ENCODE measurements at regions of chr11 and their contacts with region 1.

Region 1: GRCh38 chr11:59753650-59754493 is 1.3 kb upstream of the STX3 start:
- DNase-seq: peak; percentile 72 to 82 (median 79)
- H3K4me3 ChIP-seq: peak overlapping the region; percentile 62 to 79
- H3K4me3 Mint-ChIP-seq: peak overlapping the region; percentile 87 to 99 (median 96)
- H3K27ac ChIP-seq: peak overlapping the region; percentile 44
- H3K27ac Mint-ChIP-seq: peak overlapping the region; percentile 59 to 94 (median 84)
- H3K4me1 ChIP-seq: peaks cover 9% of the 10 kb centered on the region
- H3K4me1 Mint-ChIP-seq: peaks cover 16 to 42% (median 23%) of the 10 kb centered on the region in 4 donors
- H3K27me3 ChIP-seq: no peaks in the 10 kb centered on the region
- H3K27me3 Mint-ChIP-seq: peaks cover 8 to 10% of the 10 kb centered on the region in 2 donors

Region 2: GRCh38 chr11:58900479-58901420 is 853.1 kb before region 1 on chr11:
- CTCF ChIA-PET with region 1: no interaction called
- POLR2A ChIA-PET with region 1: no interaction called
- intact Hi-C with region 1: no loop called
- DNase-seq: no peak
- H3K4me3 ChIP-seq: no peak overlapping the region
- H3K4me3 Mint-ChIP-seq: no peak overlapping the region
- H3K27ac ChIP-seq: no peak overlapping the region
- H3K27ac Mint-ChIP-seq: no peak overlapping the region
- H3K4me1 ChIP-seq: no peaks in the 10 kb centered on the region
- H3K4me1 Mint-ChIP-seq: no peaks in the 10 kb centered on the region
- H3K27me3 ChIP-seq: no peaks in the 10 kb centered on the region
- H3K27me3 Mint-ChIP-seq: peaks cover 40 to 47% of the 10 kb centered on the region in 2 donors

Region 3: GRCh38 chr11:59542142-59542810 is 211.6 kb before region 1 on chr11:
- CTCF ChIA-PET with region 1: interaction called, 4 read pairs
- POLR2A ChIA-PET with region 1: no interaction called
- intact Hi-C with region 1: loop called (anchors 2 kb)
- DNase-seq: no peak
- H3K4me3 ChIP-seq: no peak overlapping the region
- H3K4me3 Mint-ChIP-seq: no peak overlapping the region
- H3K27ac ChIP-seq: no peak overlapping the region
- H3K27ac Mint-ChIP-seq: no peak overlapping the region
- H3K4me1 ChIP-seq: peaks cover 4% of the 10 kb centered on the region
- H3K4me1 Mint-ChIP-seq: peaks cover 4 to 9% (median 5%) of the 10 kb centered on the region in 4 donors
- H3K27me3 ChIP-seq: no peaks in the 10 kb centered on the region
- H3K27me3 Mint-ChIP-seq: no peaks in the 10 kb centered on the region

Region 4: DNA sequence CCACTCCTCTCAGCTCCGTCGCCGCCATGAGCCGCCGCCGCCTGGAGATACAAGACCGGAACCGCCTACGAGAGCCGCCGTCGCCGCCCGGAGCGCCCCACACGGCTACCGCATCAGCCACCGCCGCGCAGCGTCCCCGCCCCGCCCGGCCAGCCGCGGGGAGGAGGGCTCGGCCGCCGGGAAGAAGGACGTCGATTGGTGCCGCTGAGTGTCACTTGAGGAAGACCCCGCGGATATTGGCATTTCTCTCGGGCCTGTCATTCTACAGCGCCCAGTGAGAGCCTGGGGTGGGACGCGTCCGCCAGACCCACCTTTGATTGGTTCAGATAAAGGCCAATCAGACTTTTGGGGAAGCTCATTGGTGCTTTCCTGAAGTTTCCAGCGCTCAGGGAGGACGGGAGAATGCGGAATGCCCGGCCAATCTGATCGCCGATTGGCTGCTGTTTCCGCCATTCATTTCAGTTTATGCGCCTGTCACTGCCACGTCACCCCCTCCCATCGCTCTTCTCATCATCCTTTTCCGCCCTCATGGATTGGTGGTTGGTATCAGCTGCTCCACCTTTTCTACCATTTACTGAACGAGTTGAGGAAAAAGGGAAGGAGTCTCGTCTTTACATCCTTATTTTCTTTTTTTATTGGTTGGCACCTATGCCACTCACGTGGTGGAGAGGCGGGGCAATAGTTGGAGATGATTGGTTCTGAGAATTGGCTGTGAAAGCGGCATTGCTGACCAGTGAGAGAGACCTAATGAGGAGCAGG is 138.1 kb before region 1 on chr11 and contains the start of gene OSBP:
- CTCF ChIA-PET with region 1: no interaction called
- POLR2A ChIA-PET with region 1: interaction called, 12 read pairs
- intact Hi-C with region 1: loop called (anchors 2 kb)
- DNase-seq: peak; percentile 98 to 100 (median 100)
- H3K4me3 ChIP-seq: peak within 1 kb of the TSS; percentile 84 to 86
- H3K4me3 Mint-ChIP-seq: peak within 1 kb of the TSS; percentile 93 to 99 (median 96)
- H3K27ac ChIP-seq: peak within 1 kb of the TSS; percentile 95
- H3K27ac Mint-ChIP-seq: peak within 1 kb of the TSS; percentile 83 to 99 (median 98)
- H3K4me1 ChIP-seq: peaks cover 48% of the 10 kb centered on the region
- H3K4me1 Mint-ChIP-seq: peaks cover 29 to 53% (median 42%) of the 10 kb centered on the region in 4 donors
- H3K27me3 ChIP-seq: no peaks in the 10 kb centered on the region
- H3K27me3 Mint-ChIP-seq: no peaks in the 10 kb centered on the region
- total RNA-seq, gene OSBP: 55.3 to 55.6 TPM

Region 5: GRCh38 chr11:59728913-59729312 is 25.0 kb before region 1 on chr11:
- CTCF ChIA-PET with region 1: no interaction called
- POLR2A ChIA-PET with region 1: no interaction called
- intact Hi-C with region 1: no loop called
- DNase-seq: peak in 1 of 5 donors; percentile 31
- H3K4me3 ChIP-seq: no peak overlapping the region
- H3K4me3 Mint-ChIP-seq: no peak overlapping the region
- H3K27ac ChIP-seq: no peak overlapping the region
- H3K27ac Mint-ChIP-seq: peak overlapping the region in 1 of 7 donors; percentile 5
- H3K4me1 ChIP-seq: no peaks in the 10 kb centered on the region
- H3K4me1 Mint-ChIP-seq: peaks cover 0 to 7% (median 2%) of the 10 kb centered on the region in 4 donors
- H3K27me3 ChIP-seq: no peaks in the 10 kb centered on the region
- H3K27me3 Mint-ChIP-seq: peaks cover 2 to 6% of the 10 kb centered on the region in 2 donors

Region 6: DNA sequence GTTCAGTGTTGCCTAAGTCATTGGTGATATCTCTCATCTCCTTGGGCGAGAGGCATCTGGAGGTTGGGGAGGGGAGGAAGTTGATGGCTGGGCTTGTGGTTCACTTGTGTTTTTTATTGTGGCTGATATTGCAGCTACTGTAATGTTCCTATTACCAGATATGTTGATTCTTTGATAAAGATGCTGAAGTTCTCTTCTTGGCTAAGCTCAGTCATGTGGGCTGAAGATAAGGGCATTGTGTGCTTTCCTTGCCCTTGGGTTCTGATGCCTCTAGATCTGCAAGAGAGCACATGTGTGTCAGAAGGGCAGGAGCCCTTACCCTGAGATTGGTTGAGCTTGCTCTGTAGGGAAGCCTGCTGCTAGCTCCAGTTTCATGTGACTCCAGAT is 13.3 kb after region 1 on chr11:
- CTCF ChIA-PET with region 1: interaction called, 53 read pairs
- POLR2A ChIA-PET with region 1: interaction called, 26 read pairs
- intact Hi-C with region 1: loop called (anchors 1 kb)
- DNase-seq: peak; percentile 58 to 66 (median 64)
- H3K4me3 ChIP-seq: no peak overlapping the region
- H3K4me3 Mint-ChIP-seq: peak overlapping the region in 4 of 8 donors; percentile 52 to 67 (median 59)
- H3K27ac ChIP-seq: no peak overlapping the region
- H3K27ac Mint-ChIP-seq: peak overlapping the region in 6 of 7 donors; percentile 4 to 84 (median 18)
- H3K4me1 ChIP-seq: peaks cover 54% of the 10 kb centered on the region
- H3K4me1 Mint-ChIP-seq: peaks cover 15 to 34% (median 27%) of the 10 kb centered on the region in 4 donors
- H3K27me3 ChIP-seq: no peaks in the 10 kb centered on the region
- H3K27me3 Mint-ChIP-seq: peaks cover 0 to 2% of the 10 kb centered on the region in 2 donors

Region 7: GRCh38 chr11:59802639-59803176 is 48.8 kb after region 1 on chr11:
- CTCF ChIA-PET with region 1: interaction called, 140 read pairs
- POLR2A ChIA-PET with region 1: interaction called, 10 read pairs
- intact Hi-C with region 1: loop called (anchors 1 kb)
- DNase-seq: peak; percentile 60 to 70 (median 64)
- H3K4me3 ChIP-seq: no peak overlapping the region
- H3K4me3 Mint-ChIP-seq: no peak overlapping the region
- H3K27ac ChIP-seq: no peak overlapping the region
- H3K27ac Mint-ChIP-seq: peak overlapping the region in 2 of 7 donors; percentile 10 to 34
- H3K4me1 ChIP-seq: no peaks in the 10 kb centered on the region
- H3K4me1 Mint-ChIP-seq: no peaks in the 10 kb centered on the region
- H3K27me3 ChIP-seq: no peaks in the 10 kb centered on the region
- H3K27me3 Mint-ChIP-seq: no peaks in the 10 kb centered on the region

Region 8: DNA sequence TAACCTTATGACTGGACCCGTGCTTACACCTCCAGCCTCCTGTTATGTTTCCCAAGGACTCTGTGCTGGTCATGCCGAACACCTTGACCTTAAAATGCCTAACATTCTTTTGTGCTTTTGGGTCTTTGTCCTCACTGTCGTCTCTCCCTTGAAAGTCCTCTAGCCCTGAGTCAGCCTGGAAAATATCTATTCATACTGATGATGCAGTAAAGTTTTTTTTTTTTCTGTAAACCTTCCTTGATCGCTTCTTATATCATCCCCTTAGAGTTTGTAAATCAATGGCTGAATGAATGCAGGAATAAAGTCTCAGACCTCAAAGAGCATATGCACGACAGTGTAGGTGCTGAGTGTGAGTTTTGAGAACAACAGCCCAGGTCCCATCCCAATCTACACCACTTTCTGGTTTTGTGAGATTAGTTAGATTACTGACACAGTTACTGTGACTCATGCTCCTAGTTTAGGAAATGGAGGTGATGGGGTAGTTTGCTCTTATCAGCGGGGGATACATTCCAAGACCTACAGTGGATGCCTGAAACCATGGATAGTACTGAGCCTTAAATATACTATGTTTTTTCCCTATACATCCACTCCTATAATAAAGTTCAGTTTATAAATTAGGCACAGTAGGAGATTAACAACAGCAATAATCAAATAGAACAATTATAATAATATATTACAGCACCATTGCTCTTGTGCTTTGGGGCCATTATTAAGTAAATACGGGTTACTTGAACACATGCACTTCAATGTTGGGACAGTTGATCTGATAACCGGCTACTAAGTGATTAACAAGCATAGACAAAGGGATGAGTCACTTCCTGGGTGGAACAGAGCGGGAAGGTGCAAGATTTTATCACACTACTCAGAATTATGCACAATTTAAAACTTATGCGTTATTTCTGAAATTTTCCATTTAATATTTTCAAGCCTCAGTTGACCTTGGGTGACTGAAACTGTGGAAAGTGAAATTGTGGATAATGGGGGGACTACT is 103.9 kb after region 1 on chr11:
- CTCF ChIA-PET with region 1: no interaction called
- POLR2A ChIA-PET with region 1: no interaction called
- intact Hi-C with region 1: no loop called
- DNase-seq: peak in 4 of 5 donors; percentile 1 to 67 (median 12)
- H3K4me3 ChIP-seq: no peak overlapping the region
- H3K4me3 Mint-ChIP-seq: peak overlapping the region in 7 of 8 donors; percentile 0 to 64 (median 35)
- H3K27ac ChIP-seq: no peak overlapping the region
- H3K27ac Mint-ChIP-seq: peak overlapping the region in 5 of 7 donors; percentile 14 to 83 (median 62)
- H3K4me1 ChIP-seq: peaks cover 16% of the 10 kb centered on the region
- H3K4me1 Mint-ChIP-seq: peaks cover 13 to 35% (median 22%) of the 10 kb centered on the region in 4 donors
- H3K27me3 ChIP-seq: no peaks in the 10 kb centered on the region
- H3K27me3 Mint-ChIP-seq: no peaks in the 10 kb centered on the region

Region 9: DNA sequence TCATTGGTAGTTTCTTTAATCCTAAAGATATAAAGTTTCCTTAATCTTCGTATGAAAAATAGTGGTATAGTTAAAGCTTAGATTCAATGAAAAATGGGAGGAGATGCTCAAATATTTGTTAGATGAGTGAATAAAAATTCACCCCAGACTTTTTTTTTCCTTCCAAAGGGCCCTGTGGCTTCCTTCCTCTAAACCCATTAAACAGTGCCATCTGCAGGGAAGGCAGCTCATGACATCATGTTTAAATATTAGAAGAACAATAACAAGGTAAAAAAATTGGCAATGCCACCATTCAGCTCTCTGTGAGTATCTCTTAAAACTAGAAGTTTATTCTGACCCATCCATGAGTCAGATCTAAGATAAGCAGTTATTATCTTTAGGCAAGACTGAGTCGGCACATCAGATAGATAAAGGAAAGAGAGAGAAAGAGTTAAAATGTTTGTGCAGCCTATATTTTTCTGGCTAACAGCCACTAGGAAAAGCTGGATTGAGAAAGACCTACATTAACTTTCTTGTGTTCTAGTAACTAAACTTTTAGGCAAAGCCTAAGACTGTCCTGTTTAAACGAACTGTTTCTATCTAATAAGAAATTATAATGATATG is 165.2 kb after region 1 on chr11:
- CTCF ChIA-PET with region 1: interaction called, 7 read pairs
- POLR2A ChIA-PET with region 1: no interaction called
- intact Hi-C with region 1: loop called (anchors 2 kb)
- DNase-seq: peak in 1 of 5 donors; percentile 4
- H3K4me3 ChIP-seq: no peak overlapping the region
- H3K4me3 Mint-ChIP-seq: no peak overlapping the region
- H3K27ac ChIP-seq: no peak overlapping the region
- H3K27ac Mint-ChIP-seq: no peak overlapping the region
- H3K4me1 ChIP-seq: no peaks in the 10 kb centered on the region
- H3K4me1 Mint-ChIP-seq: no peaks in the 10 kb centered on the region
- H3K27me3 ChIP-seq: no peaks in the 10 kb centered on the region
- H3K27me3 Mint-ChIP-seq: peaks cover 1 to 2% of the 10 kb centered on the region in 2 donors

Region 10: GRCh38 chr11:60455531-60456042 is 701.7 kb after region 1 on chr11 and contains the start of gene MS4A1:
- CTCF ChIA-PET with region 1: no interaction called
- POLR2A ChIA-PET with region 1: no interaction called
- intact Hi-C with region 1: no loop called
- DNase-seq: peak in 1 of 5 donors; percentile 3
- H3K4me3 ChIP-seq: no peak within 1 kb of the TSS
- H3K4me3 Mint-ChIP-seq: peak within 1 kb of the TSS in 7 of 8 donors; percentile 17 to 73 (median 66)
- H3K27ac ChIP-seq: no peak within 1 kb of the TSS
- H3K27ac Mint-ChIP-seq: peak within 1 kb of the TSS in 2 of 7 donors; percentile 65 to 80
- H3K4me1 ChIP-seq: peaks cover 8% of the 10 kb centered on the region
- H3K4me1 Mint-ChIP-seq: peaks cover 11 to 23% (median 14%) of the 10 kb centered on the region in 4 donors
- H3K27me3 ChIP-seq: no peaks in the 10 kb centered on the region
- H3K27me3 Mint-ChIP-seq: peaks cover 3 to 7% of the 10 kb centered on the region in 2 donors
- total RNA-seq, gene MS4A1: 4.7 to 5.7 TPM